ENCODE measurements at regions of chr1 and their contacts with region 1.

Region 1: DNA sequence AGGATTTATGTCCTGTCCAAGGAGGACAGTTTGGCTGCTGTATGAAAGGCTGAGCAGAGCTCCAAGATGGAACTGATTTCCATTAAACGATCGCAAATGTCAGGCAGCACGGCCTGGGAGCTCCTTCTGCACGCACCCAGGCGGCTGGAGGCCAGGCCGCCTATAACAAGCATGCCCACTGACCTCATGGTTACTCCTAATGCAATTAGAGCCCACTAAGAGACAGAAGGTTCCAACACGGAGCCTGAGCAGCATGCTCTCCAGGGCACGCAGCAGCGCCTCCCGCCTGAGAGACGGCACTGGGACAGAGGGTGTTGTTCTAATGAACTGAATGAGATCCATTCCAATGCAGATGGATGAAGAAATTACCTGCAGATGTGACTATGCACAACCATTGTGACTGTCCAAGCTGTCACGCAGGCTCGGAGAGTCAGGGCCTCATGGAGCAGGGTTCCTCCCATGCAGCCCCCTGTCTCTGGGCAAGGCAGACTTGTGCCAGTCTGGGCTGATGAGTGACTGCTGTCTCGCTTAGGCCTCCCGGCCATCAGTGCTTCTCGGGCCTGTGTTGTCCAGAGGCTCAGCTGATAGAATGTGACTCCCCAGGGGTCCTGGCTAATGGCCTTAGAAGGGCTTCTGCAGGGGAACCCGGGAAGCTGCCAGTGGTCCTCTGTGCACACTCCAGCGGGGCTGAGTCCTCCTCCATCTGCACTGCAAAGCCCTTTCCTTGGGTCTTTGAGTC is 25.1 kb upstream of the CDCA8 start:
- DNase-seq: peak; percentile 62

Region 2: DNA sequence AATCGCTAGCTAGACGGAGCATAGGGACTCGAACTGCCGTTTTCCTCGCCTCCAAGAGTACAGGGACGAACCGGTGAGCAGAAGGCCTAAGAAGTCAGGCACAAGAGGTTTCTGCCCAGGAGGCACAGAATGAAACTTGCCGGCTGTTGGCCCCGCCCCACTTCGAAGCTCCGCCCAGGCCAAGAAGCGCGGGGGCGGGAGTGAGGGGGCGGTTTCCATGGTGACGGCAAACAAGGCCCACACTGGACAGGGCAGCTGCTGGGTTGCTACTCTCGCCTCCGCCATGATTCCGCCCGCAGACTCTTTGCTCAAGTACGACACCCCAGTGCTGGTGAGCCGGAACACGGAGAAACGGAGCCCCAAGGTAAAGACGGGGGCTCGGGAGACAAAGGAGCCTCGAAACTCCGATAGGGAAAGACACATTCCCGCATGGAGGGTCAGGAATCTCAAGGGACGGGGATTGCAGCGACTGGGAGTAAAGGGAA is 110.4 kb before region 1 on chr1 and contains the start of gene DNALI1:
- intact Hi-C with region 1: no loop called
- DNase-seq: peak; percentile 94
- total RNA-seq, gene DNALI1: 2.1 to 3.9 TPM

Region 3: GRCh38 chr1:37622131-37622530 is 45.1 kb before region 1 on chr1:
- intact Hi-C with region 1: loop called in 1 of 2 experiments (anchors 1 kb)
- DNase-seq: peak; percentile 16

Region 4: GRCh38 chr1:37641059-37641458 is 26.1 kb before region 1 on chr1:
- intact Hi-C with region 1: no loop called
- DNase-seq: no peak

Region 5: DNA sequence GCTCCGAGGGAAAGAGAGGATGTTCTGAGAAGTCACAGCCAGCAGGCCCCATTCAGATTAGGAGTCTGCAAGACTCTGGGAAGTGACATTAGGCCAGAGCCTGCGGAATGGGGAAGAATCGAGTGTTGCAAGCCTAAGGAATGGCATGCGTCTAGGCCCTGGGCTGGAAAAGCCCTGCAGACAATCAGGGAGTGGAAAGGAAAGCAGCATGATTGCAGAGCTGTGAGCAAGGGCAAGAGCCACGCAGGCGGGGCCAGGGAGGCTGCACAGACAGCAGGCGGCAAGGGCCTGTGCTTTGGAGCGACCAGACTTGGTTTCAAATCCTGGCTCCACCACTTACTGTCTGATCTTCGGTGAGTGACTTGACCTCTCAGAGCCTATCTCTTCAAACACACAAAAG is 1074.1 kb after region 1 on chr1:
- intact Hi-C with region 1: loop called in 1 of 2 experiments (anchors 10 kb)
- DNase-seq: no peak